Activated B cell treated with CpG ODN at 0.5 μM for 24 hours (primary cell): ENCODE measurements at regions of chr2 and their contacts with region 1.

Region 1: DNA sequence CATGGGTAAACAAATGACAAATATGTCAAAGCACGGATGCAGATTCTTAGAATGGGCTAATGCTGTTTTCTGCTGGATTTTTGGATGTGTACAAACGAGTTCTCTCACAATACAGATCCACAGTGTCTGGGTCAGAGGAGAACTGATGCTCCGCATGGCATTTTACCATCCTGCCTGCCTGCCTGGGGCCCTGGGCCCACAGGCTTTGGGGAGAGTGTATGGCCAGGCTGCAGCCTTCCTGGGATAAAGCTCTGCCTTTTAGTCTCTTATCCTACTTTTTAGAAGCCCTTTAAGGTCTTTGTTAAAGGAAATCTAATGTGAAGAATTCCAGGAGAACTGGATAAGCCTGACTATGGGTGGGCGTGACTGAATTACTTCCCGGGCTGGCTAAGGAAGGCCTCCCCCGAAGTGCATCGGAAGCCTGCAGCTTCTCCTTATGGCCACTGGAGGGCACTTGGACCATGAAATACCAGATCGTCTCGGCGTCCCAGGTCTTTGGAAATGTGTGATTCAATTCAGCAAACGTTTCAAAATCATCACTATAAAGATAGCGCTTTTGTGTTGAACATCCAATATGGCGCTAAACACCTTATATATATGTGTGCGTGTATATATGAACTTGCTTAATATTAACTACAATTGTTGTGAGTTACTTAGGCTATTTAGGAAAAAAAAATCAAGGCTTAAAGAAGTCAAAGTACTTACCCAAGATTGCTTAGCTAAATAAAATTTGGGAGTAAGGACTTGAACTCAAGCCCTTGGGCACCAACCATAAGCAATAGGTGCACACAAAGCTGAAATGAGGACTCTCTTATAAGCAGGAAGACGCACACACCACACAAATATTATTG is 15.2 kb upstream of the DNPEP start:
- DNase-seq: no peak
- ATAC-seq: peak; percentile 95
- H3K4me3 Mint-ChIP-seq: no peak overlapping the region
- H3K27ac Mint-ChIP-seq: no peak overlapping the region
- H3K4me1 Mint-ChIP-seq: no peaks in the 10 kb centered on the region
- H3K27me3 Mint-ChIP-seq: peaks cover 20% of the 10 kb centered on the region
- CTCF ChIP-seq: peak; percentile 89

Region 2: DNA sequence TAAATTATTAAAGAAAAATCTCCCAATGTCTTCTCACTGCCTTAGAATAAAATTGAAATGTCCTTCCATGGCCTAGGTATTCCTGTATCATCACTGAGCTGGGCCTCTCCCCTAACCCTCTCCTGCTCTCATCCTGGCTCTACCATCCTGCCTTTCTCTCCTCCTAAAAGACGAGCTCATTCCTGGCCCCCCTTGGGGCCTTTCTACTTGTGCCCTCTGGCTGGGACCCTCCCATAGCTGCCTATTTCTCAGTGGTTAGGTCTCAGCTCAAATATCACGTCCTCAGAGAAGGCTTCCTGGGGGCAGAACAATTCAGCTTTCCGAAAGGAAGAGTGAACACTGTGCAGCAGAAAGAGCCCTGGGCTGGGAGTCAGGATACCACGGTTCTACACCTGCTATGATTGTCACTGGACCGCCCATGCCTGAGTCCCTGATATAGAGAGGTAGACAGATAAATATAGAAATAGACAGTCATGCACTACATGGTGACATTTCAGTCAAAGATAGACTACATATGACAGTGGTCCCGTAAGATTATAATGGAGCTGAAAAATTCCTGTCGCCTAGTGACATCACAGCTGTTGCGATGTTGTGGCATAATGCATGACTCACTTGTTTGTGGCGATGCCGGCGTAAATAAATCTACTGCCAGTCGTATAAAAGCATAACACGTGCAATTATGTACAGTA is 24.6 kb before region 1 on chr2:
- CTCF ChIA-PET with region 1: no interaction called
- POLR2A ChIA-PET with region 1: no interaction called
- intact Hi-C with region 1: no loop called
- DNase-seq: no peak
- ATAC-seq: no peak
- H3K4me3 Mint-ChIP-seq: no peak overlapping the region
- H3K27ac Mint-ChIP-seq: no peak overlapping the region
- H3K4me1 Mint-ChIP-seq: no peaks in the 10 kb centered on the region
- H3K27me3 Mint-ChIP-seq: no peaks in the 10 kb centered on the region
- CTCF ChIP-seq: no peak

Region 3: GRCh38 chr2:219459460-219460311 is 56.8 kb after region 1 on chr2:
- CTCF ChIA-PET with region 1: interaction called, 9 read pairs
- POLR2A ChIA-PET with region 1: no interaction called
- intact Hi-C with region 1: loop called (anchors 1 kb)
- DNase-seq: peak; percentile 39
- ATAC-seq: peak; percentile 62
- H3K4me3 Mint-ChIP-seq: no peak overlapping the region
- H3K27ac Mint-ChIP-seq: no peak overlapping the region
- H3K4me1 Mint-ChIP-seq: no peaks in the 10 kb centered on the region
- H3K27me3 Mint-ChIP-seq: peaks cover 13% of the 10 kb centered on the region
- CTCF ChIP-seq: peak; percentile 70

Region 4: GRCh38 chr2:219530048-219530963 is 127.4 kb after region 1 on chr2:
- CTCF ChIA-PET with region 1: interaction called, 82 read pairs
- POLR2A ChIA-PET with region 1: interaction called, 3 read pairs
- intact Hi-C with region 1: loop called (anchors 1 kb)
- DNase-seq: peak; percentile 73
- ATAC-seq: peak; percentile 97
- H3K4me3 Mint-ChIP-seq: no peak overlapping the region
- H3K27ac Mint-ChIP-seq: no peak overlapping the region
- H3K4me1 Mint-ChIP-seq: no peaks in the 10 kb centered on the region
- H3K27me3 Mint-ChIP-seq: peaks cover 60% of the 10 kb centered on the region
- CTCF ChIP-seq: peak; percentile 91

Region 5: GRCh38 chr2:219642465-219643080 is 239.7 kb after region 1 on chr2:
- CTCF ChIA-PET with region 1: interaction called, 9 read pairs
- POLR2A ChIA-PET with region 1: no interaction called
- intact Hi-C with region 1: loop called (anchors 1 kb)
- DNase-seq: peak; percentile 80
- ATAC-seq: peak; percentile 100
- H3K4me3 Mint-ChIP-seq: peak overlapping the region; percentile 13
- H3K27ac Mint-ChIP-seq: peak overlapping the region; percentile 13
- H3K4me1 Mint-ChIP-seq: peaks cover 15% of the 10 kb centered on the region
- H3K27me3 Mint-ChIP-seq: peaks cover 20% of the 10 kb centered on the region
- CTCF ChIP-seq: peak; percentile 77

Region 6: GRCh38 chr2:219689676-219690628 is 287.1 kb after region 1 on chr2:
- CTCF ChIA-PET with region 1: interaction called, 8 read pairs
- POLR2A ChIA-PET with region 1: no interaction called
- intact Hi-C with region 1: loop called (anchors 1 kb)
- DNase-seq: no peak
- ATAC-seq: peak; percentile 49
- H3K4me3 Mint-ChIP-seq: no peak overlapping the region
- H3K27ac Mint-ChIP-seq: no peak overlapping the region
- H3K4me1 Mint-ChIP-seq: peaks cover 8% of the 10 kb centered on the region
- H3K27me3 Mint-ChIP-seq: peaks cover 37% of the 10 kb centered on the region
- CTCF ChIP-seq: peak; percentile 57